CD14-positive monocyte (primary cell): ENCODE measurements at regions of chr15 and their contacts with region 1.

Region 1: DNA sequence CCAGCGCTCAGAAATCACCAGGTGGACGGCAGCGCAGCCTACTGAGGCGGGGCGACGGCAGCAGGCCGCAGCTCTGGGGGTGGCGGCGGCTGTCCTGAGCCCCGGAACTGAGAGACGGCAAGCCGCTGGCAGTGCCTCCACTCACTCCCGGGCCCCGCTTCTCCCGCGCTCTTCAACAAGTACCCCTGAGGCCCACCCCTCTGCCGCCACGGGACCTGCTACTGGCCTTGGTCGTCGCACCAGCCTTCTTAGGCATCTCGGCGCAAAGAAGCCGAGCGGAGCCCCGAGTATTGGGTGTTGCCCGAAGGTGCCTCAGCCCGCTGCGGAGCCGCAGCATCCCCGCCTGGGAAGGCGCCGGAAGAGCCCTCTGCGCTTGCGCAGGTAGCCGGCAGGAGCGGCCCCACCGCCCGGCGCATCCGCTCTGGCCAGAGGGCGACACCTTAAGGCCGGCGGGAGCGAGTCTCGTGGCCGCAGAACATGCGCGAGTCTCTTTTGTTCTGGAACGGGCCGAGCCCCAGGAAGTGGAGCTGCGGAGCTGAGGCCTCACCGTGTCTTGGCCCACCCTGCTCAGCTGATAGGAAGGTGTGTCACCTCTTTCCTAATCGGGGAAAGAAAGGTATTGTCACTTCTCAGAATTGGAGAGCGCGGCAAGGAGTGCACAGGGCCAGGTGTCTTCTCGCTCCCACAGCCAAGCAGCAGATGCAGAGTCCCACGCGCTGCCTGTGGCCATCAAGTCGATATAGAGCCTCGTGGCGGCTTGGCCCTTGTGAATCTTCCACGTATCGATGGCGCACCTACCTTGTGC is at the start of gene C15orf40:
- DNase-seq: peak; percentile 82 to 89 (median 84)
- H3K4me3 ChIP-seq: peak within 1 kb of the TSS; percentile 80 to 98 (median 95)
- H3K4me3 Mint-ChIP-seq: peak within 1 kb of the TSS; percentile 92 to 96
- H3K27ac ChIP-seq: peak within 1 kb of the TSS; percentile 48 to 75
- H3K27ac Mint-ChIP-seq: peak within 1 kb of the TSS; percentile 73 to 92 (median 86)
- H3K4me1 ChIP-seq: peaks cover 26 to 33% of the 10 kb centered on the region in 2 donors
- H3K4me1 Mint-ChIP-seq: peaks cover 36% of the 10 kb centered on the region
- H3K27me3 ChIP-seq: no peaks in the 10 kb centered on the region
- H3K27me3 Mint-ChIP-seq: peaks cover 0 to 2% (median 0%) of the 10 kb centered on the region in 3 donors
- CTCF ChIP-seq: no peak
- polyA plus RNA-seq, gene C15orf40: 13.0 to 32.1 (median 25.7) TPM

Region 2: DNA sequence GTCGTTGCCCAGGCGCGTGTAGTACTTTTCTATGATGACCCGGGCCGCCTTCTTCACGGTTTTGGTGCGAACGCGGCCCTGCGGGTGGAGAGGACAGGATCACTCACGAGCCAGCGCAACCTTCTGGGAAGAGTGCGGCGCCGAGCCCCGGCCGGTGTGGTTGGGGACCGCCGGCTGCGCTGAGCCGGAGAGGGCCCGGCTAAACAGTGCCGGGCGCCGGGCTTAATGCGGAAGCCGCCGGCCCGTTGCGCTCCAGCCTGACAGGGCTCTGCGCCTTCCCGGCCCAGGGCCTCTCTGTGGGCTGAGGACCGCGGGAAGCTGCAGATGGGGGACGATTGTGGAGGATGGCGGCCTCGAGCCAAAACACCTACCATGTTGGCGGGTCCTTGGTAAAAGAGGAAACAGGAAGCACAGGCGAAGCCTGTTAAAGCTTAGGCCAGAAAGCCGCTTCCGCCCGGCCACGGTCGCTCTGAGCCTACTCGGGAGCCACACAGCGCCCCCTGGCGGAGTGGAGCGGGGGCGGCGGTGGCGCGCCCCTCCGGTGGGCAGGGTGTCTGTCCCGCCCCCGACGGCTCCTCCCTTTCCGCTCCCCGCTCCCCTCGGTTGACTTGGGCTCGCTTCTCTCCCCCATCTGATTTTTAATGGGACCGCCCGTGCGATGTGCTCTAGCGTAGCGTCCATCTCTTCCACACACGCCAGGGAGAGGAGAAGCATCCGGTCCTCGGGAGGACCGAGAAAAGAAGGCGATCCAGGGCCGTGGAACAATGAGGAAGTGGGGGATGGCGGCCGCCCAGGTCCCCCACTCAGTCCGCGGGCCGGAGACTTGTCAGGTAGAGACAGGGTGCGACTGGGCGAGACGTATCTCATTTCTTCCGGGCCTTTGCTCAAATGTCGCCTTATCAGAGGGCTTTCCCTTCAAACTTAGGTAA is 471.2 kb before region 1 on chr15 and contains the start of gene RPS17:
- intact Hi-C with region 1: loop called (anchors 5 to 10 kb)
- DNase-seq: peak; percentile 94 to 97 (median 95)
- H3K4me3 ChIP-seq: peak within 1 kb of the TSS; percentile 70 to 98 (median 77)
- H3K4me3 Mint-ChIP-seq: peak within 1 kb of the TSS; percentile 97
- H3K27ac ChIP-seq: peak within 1 kb of the TSS; percentile 79 to 95
- H3K27ac Mint-ChIP-seq: peak within 1 kb of the TSS; percentile 92 to 96 (median 95)
- H3K4me1 ChIP-seq: peaks cover 19 to 26% of the 10 kb centered on the region in 2 donors
- H3K4me1 Mint-ChIP-seq: peaks cover 27% of the 10 kb centered on the region
- H3K27me3 ChIP-seq: peaks cover 0 to 3% of the 10 kb centered on the region in 2 donors
- H3K27me3 Mint-ChIP-seq: peaks cover 0 to 6% (median 2%) of the 10 kb centered on the region in 3 donors
- CTCF ChIP-seq: peak; percentile 99
- polyA plus RNA-seq, gene RPS17: 604 to 2,881 (median 619) TPM

Region 3: DNA sequence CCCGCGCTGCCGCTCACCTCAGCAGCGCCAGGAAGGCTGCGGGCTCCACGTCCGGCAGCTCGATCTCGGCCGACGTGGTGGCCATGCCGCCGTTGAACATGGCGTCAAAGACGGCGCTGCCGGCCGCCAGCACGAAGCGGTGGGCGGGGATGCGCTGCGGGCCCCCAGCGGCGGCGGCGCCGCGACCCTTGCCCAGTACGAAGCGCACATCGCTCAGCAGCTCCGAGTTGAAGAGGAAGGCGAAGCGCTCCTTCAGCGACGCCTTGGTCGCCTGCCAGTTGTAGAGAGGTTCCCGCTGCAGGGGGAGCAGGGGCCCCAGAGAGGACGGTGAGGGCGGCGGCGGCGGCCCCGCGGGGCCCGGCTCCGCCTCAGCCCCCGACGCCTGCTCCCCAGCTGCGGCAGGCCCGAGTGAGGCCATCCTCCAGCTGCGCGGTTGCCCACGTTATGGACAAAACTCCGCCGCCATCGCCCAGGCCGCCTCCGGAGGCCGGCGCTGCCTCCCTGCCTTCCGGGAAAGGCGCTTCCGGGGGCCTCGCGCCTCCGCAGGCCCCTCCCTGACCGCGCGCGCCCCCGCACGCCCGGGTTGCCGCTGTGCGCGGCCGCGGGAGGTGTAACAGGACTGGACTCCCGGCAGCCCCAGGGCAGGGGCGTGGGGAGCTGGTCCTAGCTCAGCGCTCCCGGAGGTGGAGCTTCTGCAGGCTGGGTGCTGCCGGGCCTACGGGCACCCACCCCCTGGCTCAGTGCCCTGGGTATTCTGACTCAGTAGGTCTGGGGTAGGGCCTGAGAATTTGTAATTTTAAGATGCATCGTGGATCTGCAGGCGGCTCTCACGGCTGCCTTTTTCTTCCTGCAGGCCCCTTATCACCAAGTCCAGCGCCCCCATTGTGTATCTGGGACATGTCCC is 55.5 kb after region 1 on chr15 and contains the start of gene BTBD1:
- intact Hi-C with region 1: loop called in 1 of 2 experiments (anchors 10 kb)
- DNase-seq: peak; percentile 71 to 80 (median 76)
- H3K4me3 ChIP-seq: peak within 1 kb of the TSS; percentile 74 to 92 (median 92)
- H3K4me3 Mint-ChIP-seq: peak within 1 kb of the TSS; percentile 87 to 90
- H3K27ac ChIP-seq: peak within 1 kb of the TSS; percentile 52 to 84
- H3K27ac Mint-ChIP-seq: peak within 1 kb of the TSS; percentile 62 to 88 (median 85)
- H3K4me1 ChIP-seq: peaks cover 38 to 48% of the 10 kb centered on the region in 2 donors
- H3K4me1 Mint-ChIP-seq: peaks cover 3% of the 10 kb centered on the region
- H3K27me3 ChIP-seq: no peaks in the 10 kb centered on the region
- H3K27me3 Mint-ChIP-seq: no peaks in the 10 kb centered on the region
- CTCF ChIP-seq: no peak
- polyA plus RNA-seq, gene BTBD1: 18.0 to 48.8 (median 37.2) TPM